ENCODE measurements at regions of chr7 and their contacts with region 1.

Region 1: DNA sequence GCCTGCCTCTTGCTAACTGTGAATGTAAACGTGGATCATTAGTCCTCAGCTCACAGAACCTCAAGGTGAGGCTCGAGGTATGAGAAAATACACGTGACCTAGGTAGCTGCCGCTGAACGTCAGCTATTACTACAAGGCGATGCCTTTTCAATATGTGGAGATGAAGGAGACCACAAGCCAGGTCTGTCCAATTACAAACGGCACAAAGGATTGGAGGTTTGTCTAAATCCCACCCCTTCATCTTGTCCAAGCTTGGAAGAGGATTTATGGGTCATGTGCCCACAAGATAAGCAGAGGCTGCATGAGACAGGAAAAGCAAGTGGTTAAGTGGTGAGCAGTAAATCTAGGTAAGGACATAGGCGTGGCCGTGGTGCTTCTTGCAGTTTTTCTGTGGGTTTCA is 3.4 kb downstream of the H2BK1 start:
- DNase-seq: peak in 2 of 4 experiments; percentile 85 to 87
- ATAC-seq: peak; percentile 88
- H3K4me3 ChIP-seq: no peak overlapping the region
- H3K27ac ChIP-seq: no peak overlapping the region
- H3K4me1 ChIP-seq: peaks cover 15 to 19% of the 10 kb centered on the region in 2 experiments
- H3K27me3 ChIP-seq: peaks cover 40% of the 10 kb centered on the region in 2 experiments; a peak in 4 of 5 replicates
- CTCF ChIP-seq: no peak
- EP300 ChIP-seq: peak; percentile 66
- POLR2A ChIP-seq: no peak
- RAD21 ChIP-seq: no peak

Region 2: GRCh38 chr7:151218170-151218569 is 11.3 kb after region 1 on chr7:
- CTCF ChIA-PET with region 1: interaction called, 10 read pairs
- POLR2A ChIA-PET with region 1: interaction called, 12 read pairs
- in situ Hi-C with region 1: no loop called
- intact Hi-C with region 1: no loop called
- DNase-seq: no peak
- ATAC-seq: no peak
- H3K4me3 ChIP-seq: no peak overlapping the region
- H3K27ac ChIP-seq: no peak overlapping the region
- H3K4me1 ChIP-seq: no peaks in the 10 kb centered on the region; a peak in 1 of 5 replicates
- H3K27me3 ChIP-seq: no peaks in the 10 kb centered on the region
- CTCF ChIP-seq: no peak
- EP300 ChIP-seq: no peak
- POLR2A ChIP-seq: no peak
- RAD21 ChIP-seq: no peak

Region 3: DNA sequence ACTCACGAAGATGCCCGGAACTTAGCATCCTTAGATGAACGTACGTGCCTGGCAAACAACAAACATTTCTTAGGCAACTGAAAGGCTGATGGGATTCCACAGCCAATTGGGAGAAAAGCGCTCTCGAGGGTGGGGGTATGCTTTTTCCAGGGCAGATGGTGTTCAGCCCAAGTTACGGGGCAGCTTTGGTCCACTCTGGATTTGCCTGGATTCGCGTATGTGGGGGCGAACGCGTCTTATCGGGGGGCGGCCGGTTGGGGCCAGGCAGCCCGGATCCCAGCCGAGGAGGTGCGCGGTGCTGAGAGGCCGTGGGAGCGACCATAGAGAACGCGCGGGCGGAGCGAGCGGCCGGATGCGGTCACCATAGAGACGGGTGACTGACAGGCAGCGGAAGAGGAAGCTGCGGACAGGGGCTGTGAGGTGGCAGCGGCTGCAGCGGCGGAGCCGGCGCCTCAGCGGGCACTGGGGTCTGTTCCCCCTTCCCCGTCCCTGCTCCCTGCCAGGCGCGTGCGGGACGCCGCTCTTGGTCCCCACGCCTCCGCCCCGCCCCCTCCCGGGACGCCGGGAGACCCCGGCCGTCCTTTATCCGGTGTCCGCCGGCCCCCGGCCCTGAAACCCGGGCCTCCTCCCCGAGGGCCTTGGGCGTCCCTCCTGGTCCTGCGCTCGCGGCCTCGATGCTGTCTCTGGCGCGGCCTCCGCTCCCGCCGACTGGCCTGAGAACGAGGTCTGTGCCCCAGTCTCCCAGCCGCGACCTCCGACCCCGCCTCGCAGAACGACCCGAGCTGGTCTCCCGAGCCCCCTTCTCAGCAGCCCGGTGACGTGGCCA is 25.4 kb after region 1 on chr7 and contains the start of gene CHPF2:
- CTCF ChIA-PET with region 1: no interaction called
- POLR2A ChIA-PET with region 1: interaction called, 12 read pairs
- in situ Hi-C with region 1: no loop called
- intact Hi-C with region 1: no loop called
- DNase-seq: peak; percentile 96 to 98 (median 97)
- ATAC-seq: peak; percentile 97
- H3K4me3 ChIP-seq: peak within 1 kb of the TSS; percentile 92
- H3K27ac ChIP-seq: peak within 1 kb of the TSS; percentile 81
- H3K4me1 ChIP-seq: peaks cover 24 to 42% of the 10 kb centered on the region in 2 experiments; a peak in 4 of 5 replicates
- H3K27me3 ChIP-seq: no peaks in the 10 kb centered on the region
- CTCF ChIP-seq: no peak; a peak in 1 of 6 replicates
- EP300 ChIP-seq: peak; percentile 34; the same call in 1 of the 2 replicates
- POLR2A ChIP-seq: peak; percentile 81
- RAD21 ChIP-seq: no peak
- polyA plus RNA-seq, gene CHPF2: 0.08 to 0.24 TPM